ENCODE measurements at regions of chr14 and their contacts with region 1.

Region 1: DNA sequence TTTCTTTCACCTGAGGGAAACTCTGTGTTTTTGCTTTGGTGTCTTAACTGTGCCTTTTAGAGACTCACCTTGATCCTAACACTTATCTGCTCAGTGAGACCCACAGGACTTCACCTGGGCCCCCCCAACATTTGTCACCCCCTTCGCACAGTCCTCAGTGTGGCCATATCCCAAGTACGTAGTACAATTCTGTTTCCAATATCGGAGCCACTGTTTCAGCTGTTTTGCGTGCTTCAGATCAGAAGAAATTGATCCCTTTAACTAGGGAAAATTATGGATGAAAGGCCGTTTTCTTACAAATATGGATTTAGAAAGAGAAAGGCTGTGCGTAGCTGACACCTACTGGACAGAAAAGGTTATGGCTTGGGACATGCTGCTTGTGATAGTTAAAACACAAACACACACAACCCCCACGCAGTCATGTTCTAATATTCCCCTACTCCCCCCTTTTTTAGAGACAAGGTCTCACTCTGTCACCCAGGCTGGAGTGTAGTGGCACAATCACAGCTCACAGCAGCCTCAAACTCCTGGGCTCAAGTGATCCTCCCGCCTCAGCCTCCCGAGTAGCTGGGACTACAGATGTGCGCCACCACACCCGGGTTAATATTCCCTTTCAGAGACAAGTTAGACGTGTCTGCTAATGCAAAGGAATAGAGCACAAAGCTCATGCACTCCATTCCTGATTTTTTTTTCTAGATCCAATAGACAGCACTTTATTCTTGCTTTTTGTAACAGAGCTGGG is 3.6 kb upstream of the SLC7A8 start:
- DNase-seq: peak; percentile 65 to 82 (median 68)
- ATAC-seq: peak; percentile 77
- H3K4me3 ChIP-seq: no peak overlapping the region
- H3K27ac ChIP-seq: no peak overlapping the region
- H3K4me1 ChIP-seq: peaks cover 4% of the 10 kb centered on the region
- H3K27me3 ChIP-seq: no peaks in the 10 kb centered on the region
- CTCF ChIP-seq: peak; percentile 62 to 96 (median 93)
- POLR2A ChIP-seq: no peak

Region 2: DNA sequence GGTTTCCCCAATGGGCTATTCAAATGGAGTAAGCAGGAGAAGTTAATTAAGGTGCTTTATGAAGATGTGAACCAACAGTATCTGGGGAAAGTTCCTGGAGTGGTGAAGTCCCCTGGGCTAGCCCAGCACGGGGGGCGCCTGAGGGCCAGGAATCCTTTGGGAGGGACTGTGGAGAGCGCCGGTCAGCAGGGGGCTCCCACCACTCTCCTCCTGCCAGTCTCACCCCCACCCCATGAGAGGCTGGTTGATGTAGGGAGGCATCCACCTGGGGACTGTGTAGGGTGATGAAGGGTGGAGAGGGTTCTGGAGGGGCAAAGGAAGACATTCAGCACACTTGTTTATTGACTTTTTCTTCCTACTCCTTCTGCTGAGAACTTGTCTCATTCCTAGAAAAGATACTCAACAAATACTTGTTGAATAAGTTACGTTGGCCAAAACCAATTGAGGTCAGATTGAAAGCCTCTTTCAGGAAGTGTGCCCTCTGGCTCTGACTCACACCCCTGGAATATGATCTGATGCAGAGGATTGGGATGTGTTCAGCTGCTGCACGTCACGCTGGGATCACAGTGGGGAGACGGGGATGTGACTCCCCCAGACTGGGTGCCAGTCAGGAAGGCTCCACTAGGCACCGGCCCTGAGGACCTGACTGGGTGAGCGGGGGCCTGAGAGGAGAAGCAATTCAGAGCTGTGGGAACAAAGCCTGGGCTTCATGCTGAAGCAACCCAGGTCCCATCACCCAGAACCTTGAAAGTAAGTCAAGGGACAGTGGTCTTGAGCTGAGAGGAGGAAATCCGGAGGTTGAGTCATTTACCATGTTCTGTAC is 72.2 kb before region 1 on chr14:
- intact Hi-C with region 1: loop called (anchors 5 kb)
- DNase-seq: peak in 1 of 4 donors; percentile 29
- ATAC-seq: no peak
- H3K4me3 ChIP-seq: no peak overlapping the region
- H3K27ac ChIP-seq: no peak overlapping the region
- H3K4me1 ChIP-seq: no peaks in the 10 kb centered on the region
- H3K27me3 ChIP-seq: peaks cover 0 to 7% of the 10 kb centered on the region in 2 donors
- CTCF ChIP-seq: no peak
- POLR2A ChIP-seq: no peak

Region 3: GRCh38 chr14:23436327-23437132 is 249.4 kb after region 1 on chr14:
- intact Hi-C with region 1: no loop called
- DNase-seq: peak in 3 of 4 donors; percentile 39 to 61 (median 57)
- ATAC-seq: no peak
- H3K4me3 ChIP-seq: no peak overlapping the region
- H3K27ac ChIP-seq: no peak overlapping the region
- H3K4me1 ChIP-seq: no peaks in the 10 kb centered on the region
- H3K27me3 ChIP-seq: no peaks in the 10 kb centered on the region
- CTCF ChIP-seq: no peak
- POLR2A ChIP-seq: no peak

Region 4: DNA sequence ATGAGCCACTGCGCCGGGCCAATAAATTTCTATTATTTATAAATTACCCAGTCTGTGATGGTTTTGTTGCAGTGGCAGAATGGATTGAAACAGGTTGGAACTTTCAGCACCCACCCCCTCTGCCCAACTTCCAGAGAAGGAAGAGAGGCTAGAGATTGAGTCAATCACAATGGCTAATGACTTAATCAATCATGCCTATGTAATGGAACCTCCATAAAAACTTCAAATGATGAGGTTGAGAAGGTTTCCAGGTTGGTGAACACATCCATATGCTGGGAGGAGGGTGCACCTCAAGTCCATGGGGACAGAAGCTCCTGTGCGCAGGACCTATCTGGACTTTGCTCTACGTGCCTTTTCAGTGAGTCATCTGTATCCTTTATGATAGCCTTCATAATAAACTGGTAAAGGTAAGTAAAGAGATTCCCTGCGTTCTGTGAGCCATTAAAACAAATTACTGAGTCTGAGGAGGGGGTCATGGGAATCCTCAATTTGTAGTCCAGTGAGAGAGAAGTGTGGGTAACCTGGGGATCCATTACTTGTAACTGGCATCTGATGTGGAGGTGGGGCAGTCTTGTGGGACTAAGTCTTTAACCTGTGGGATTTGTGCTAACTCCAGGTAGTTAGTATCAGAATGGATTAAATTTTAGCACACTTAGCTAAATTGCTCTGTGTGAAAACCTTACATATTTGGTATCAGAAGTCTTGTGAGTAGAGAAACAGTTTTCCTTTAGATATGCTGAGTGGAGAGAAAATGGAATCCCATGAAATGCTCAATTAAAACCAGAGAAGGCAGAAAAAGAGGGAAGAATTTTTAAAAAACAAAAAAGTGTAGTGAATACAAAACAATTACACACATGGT is 270.7 kb after region 1 on chr14:
- intact Hi-C with region 1: no loop called
- DNase-seq: no peak
- ATAC-seq: no peak
- H3K4me3 ChIP-seq: no peak overlapping the region
- H3K27ac ChIP-seq: no peak overlapping the region
- H3K4me1 ChIP-seq: no peaks in the 10 kb centered on the region
- H3K27me3 ChIP-seq: no peaks in the 10 kb centered on the region
- CTCF ChIP-seq: no peak
- POLR2A ChIP-seq: no peak